ENCODE measurements at regions of chr19 and their contacts with region 1.

Region 1: GRCh38 chr19:36665832-36666231 is 805 bp downstream of the ZNF461 start:
- DNase-seq: no peak
- H3K4me3 ChIP-seq: peak overlapping the region; percentile 58 to 94 (median 86)
- H3K27ac ChIP-seq: no peak overlapping the region
- H3K4me1 ChIP-seq: no peaks in the 10 kb centered on the region
- H3K27me3 ChIP-seq: no peaks in the 10 kb centered on the region
- CTCF ChIP-seq: no peak
- POLR2A ChIP-seq: no peak

Region 2: DNA sequence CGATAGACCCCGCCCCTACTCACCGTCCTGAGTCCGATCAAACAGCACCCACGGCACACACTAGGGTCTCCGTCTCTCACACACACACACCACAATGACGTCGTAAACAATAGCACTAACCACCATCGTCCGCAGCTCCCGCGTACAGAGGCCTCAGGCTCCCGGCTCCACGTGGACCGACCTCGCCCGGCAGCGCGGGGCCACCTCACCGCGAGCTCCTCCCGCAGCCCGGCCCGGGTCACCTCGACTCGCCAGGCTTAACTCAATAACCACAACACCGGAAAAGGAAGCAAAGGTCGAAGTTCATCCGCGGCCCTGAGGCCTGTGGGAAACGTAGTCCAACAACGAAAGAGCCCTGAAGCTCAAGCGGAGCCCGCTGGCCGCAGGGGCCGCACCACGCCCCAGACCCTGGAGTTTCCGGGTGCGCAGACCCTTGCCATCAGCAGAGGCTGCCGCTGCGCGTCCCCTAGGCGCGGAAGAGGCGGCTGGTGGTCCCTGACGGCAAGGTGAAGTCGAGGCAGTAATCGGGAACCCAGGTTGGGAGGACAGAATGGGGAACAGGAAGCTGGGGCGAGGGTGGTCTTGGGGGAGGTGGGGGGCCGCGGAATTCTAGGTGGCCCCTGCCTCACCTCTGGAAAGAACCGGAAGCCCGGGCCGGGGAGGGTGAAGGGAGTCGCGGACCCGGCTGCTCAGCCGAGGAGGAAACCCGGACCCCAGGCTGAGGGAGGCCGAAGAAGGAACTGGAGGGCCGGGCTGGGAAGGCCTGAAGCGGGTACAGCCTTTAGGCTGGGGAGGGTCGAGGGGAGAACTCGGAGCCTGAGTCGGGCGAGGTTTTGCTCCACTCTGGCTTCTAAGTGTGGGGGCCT is 92.6 kb before region 1 on chr19 and contains the start of gene ZNF529:
- CTCF ChIA-PET with region 1: no interaction called
- POLR2A ChIA-PET with region 1: no interaction called
- dilution Hi-C with region 1: no loop called
- intact Hi-C with region 1: loop called (anchors 1 kb)
- DNase-seq: peak; percentile 94
- H3K4me3 ChIP-seq: peak within 1 kb of the TSS; percentile 3 to 78 (median 57)
- H3K27ac ChIP-seq: peak within 1 kb of the TSS; percentile 22
- H3K4me1 ChIP-seq: peaks cover 8% of the 10 kb centered on the region
- H3K27me3 ChIP-seq: no peaks in the 10 kb centered on the region
- CTCF ChIP-seq: no peak
- POLR2A ChIP-seq: peak; percentile 73
- total RNA-seq, gene ZNF529: 5.3 and 8.4 TPM in 2 replicates

Region 3: GRCh38 chr19:36605101-36605876 is 60.5 kb before region 1 on chr19 and contains the start of gene ZNF382:
- CTCF ChIA-PET with region 1: no interaction called
- POLR2A ChIA-PET with region 1: no interaction called
- dilution Hi-C with region 1: no loop called
- intact Hi-C with region 1: loop called (anchors 2 kb)
- DNase-seq: peak; percentile 60
- H3K4me3 ChIP-seq: peak within 1 kb of the TSS; percentile 56 to 82 (median 61)
- H3K27ac ChIP-seq: no peak within 1 kb of the TSS
- H3K4me1 ChIP-seq: no peaks in the 10 kb centered on the region
- H3K27me3 ChIP-seq: no peaks in the 10 kb centered on the region
- CTCF ChIP-seq: no peak
- POLR2A ChIP-seq: peak; percentile 25
- total RNA-seq, gene ZNF382: 4.2 and 4.3 TPM in 2 replicates

Region 4: DNA sequence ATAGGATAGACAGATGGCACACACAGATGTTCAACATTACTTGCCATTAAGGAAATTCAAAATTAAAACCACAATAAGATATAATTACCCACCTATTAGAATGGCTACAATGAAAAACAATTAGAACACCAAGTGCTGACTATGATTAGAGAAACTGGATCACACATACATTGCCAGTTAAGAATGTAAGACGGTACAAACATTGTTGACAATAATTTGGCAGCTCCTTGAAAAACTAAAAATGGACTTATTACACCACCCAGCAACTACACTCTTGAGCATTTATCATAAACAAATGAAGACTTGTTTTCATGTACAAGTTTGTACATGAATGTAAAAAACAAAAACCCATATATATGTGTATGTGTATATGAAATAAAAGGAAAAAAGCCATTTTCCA is 12.9 kb before region 1 on chr19:
- CTCF ChIA-PET with region 1: no interaction called
- POLR2A ChIA-PET with region 1: no interaction called
- dilution Hi-C with region 1: no loop called
- intact Hi-C with region 1: no loop called
- DNase-seq: no peak
- H3K4me3 ChIP-seq: no peak overlapping the region
- H3K27ac ChIP-seq: no peak overlapping the region
- H3K4me1 ChIP-seq: no peaks in the 10 kb centered on the region
- H3K27me3 ChIP-seq: no peaks in the 10 kb centered on the region
- CTCF ChIP-seq: no peak
- POLR2A ChIP-seq: no peak

Region 5: GRCh38 chr19:36687214-36688056 is 21.6 kb after region 1 on chr19 and contains the start of gene ZNF567:
- CTCF ChIA-PET with region 1: interaction called, 3 read pairs
- POLR2A ChIA-PET with region 1: no interaction called
- dilution Hi-C with region 1: no loop called
- intact Hi-C with region 1: loop called (anchors 1 kb)
- DNase-seq: peak; percentile 88
- H3K4me3 ChIP-seq: peak within 1 kb of the TSS; percentile 10 to 80 (median 80)
- H3K27ac ChIP-seq: peak within 1 kb of the TSS; percentile 0
- H3K4me1 ChIP-seq: peaks cover 13% of the 10 kb centered on the region
- H3K27me3 ChIP-seq: no peaks in the 10 kb centered on the region
- CTCF ChIP-seq: no peak
- POLR2A ChIP-seq: peak; percentile 72
- total RNA-seq, gene ZNF567: 4.4 and 5.9 TPM in 2 replicates

Region 6: DNA sequence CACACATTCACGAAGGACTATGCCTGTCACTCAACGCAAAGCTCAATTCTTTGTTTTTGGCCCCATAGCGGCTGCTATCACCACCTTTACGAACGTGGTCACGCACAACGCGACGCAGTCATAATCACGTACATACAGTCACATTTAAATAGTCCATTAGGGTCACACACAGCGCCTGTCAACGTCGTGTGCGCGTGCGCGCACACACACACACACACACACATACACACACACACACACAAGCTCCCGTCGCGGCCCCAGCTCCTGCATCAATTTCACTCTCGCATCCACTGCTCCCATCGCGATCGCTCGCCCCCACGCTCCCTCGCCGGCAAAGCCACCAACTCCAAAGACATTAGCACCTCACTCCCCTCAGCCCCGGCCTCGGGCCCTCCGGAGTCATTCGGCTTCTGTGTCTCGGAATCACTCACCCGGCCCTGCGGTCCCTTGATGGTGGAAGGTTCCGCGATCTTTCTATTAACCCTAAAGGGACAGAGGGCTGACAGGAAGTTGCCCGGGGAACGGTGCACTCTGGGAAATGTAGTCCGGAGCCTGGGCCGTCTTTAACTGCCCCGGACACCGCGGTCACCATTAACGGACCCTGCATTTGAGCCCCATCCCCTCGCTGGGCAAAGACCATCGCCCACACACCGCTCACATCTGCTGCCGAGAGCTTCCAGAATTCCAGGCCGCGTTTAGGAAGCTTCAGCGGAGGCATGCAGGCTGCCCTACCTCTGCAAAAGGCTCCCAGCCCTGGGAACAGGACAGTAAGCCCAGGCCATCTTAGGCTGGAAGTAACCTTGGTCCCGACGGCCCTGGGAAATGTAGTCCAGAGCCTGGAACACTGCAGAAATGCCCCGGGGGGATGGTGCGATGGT is 172.3 kb after region 1 on chr19 and contains the start of gene ZNF790:
- CTCF ChIA-PET with region 1: no interaction called
- POLR2A ChIA-PET with region 1: no interaction called
- dilution Hi-C with region 1: no loop called
- intact Hi-C with region 1: loop called (anchors 10 kb)
- DNase-seq: peak; percentile 91
- H3K4me3 ChIP-seq: peak within 1 kb of the TSS; percentile 37 to 64 (median 43)
- H3K27ac ChIP-seq: peak within 1 kb of the TSS; percentile 44
- H3K4me1 ChIP-seq: peaks cover 3% of the 10 kb centered on the region
- H3K27me3 ChIP-seq: no peaks in the 10 kb centered on the region
- CTCF ChIP-seq: no peak
- POLR2A ChIP-seq: peak; percentile 44
- total RNA-seq, gene ZNF790: 5.2 and 5.6 TPM in 2 replicates